Natural killer cell (primary cell): ENCODE measurements at regions of chrX and their contacts with region 1.

Region 1: GRCh38 chrX:38985375-38985774 is 184.1 kb downstream of the MID1IP1 start:
- DNase-seq: peak in 1 of 2 donors; percentile 48
- ATAC-seq: no peak
- H3K4me3 ChIP-seq: no peak overlapping the region
- H3K4me3 Mint-ChIP-seq: no peak overlapping the region
- H3K27ac ChIP-seq: no peak overlapping the region
- H3K27ac Mint-ChIP-seq: no peak overlapping the region
- H3K4me1 ChIP-seq: no peaks in the 10 kb centered on the region
- H3K4me1 Mint-ChIP-seq: no peaks in the 10 kb centered on the region
- H3K27me3 ChIP-seq: no peaks in the 10 kb centered on the region
- H3K27me3 Mint-ChIP-seq: peaks cover 0 to 12% of the 10 kb centered on the region in 2 donors
- CTCF ChIP-seq: no peak

Region 2: DNA sequence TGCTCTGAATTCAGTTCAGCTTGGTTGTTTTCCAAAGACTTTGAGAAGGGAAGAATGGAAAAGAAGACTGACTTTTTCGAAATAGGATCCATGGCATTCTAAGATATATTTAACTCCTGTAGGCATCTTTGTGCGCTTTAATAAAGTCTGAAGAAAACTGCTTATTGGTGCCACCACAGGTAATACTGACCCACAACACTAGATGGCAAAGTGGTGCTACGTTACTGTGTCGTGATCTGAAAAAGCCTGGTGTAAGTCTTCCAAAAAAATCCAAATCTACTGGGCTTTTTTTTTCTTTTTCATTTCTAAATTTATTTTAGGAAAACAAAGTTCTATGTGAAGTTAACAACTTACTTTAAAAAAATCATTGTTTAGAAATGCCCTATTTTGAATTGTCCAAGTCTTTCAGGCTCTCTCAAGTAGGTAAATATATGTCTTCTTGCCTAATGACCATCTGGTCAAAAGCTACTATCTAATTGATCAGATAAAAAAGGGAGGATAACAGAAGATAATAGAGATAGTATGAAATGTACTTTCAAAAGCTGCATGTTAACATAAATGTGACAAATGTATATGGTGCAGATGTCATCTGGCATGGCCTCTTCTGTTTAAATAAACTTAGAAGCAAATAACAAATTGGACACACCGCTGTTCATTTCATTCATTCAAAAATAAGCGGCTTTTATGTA is 231.1 kb before region 1 on chrX:
- intact Hi-C with region 1: loop called (anchors 1 kb)
- DNase-seq: peak in 1 of 2 donors; percentile 70
- ATAC-seq: peak in 2 of 3 donors; percentile 49 to 72
- H3K4me3 ChIP-seq: no peak overlapping the region
- H3K4me3 Mint-ChIP-seq: no peak overlapping the region
- H3K27ac ChIP-seq: no peak overlapping the region
- H3K27ac Mint-ChIP-seq: no peak overlapping the region
- H3K4me1 ChIP-seq: no peaks in the 10 kb centered on the region
- H3K4me1 Mint-ChIP-seq: no peaks in the 10 kb centered on the region
- H3K27me3 ChIP-seq: no peaks in the 10 kb centered on the region
- H3K27me3 Mint-ChIP-seq: peaks cover 12 to 26% of the 10 kb centered on the region in 2 donors
- CTCF ChIP-seq: peak; percentile 40

Region 3: DNA sequence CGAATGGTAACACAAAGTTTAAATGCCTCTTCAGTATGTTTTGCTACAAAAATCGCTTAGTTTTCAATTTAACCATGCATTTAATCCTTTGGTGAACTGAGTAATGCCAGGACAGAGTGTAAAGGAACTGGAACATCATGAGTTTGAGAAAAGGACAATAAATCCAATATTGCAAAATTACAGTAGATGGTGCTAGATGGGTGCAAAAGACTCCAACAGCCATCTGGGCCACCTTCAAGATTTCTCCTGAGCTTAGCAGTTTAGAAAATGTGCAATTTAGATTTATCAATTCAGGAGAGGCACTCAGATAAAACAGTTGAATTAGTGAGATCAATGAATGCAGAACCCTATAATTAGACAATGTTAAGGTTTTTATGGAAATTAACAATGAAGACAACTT is 217.3 kb before region 1 on chrX:
- intact Hi-C with region 1: loop called (anchors 5 kb)
- DNase-seq: peak in 1 of 2 donors; percentile 54
- ATAC-seq: no peak
- H3K4me3 ChIP-seq: no peak overlapping the region
- H3K4me3 Mint-ChIP-seq: no peak overlapping the region
- H3K27ac ChIP-seq: no peak overlapping the region
- H3K27ac Mint-ChIP-seq: no peak overlapping the region
- H3K4me1 ChIP-seq: no peaks in the 10 kb centered on the region
- H3K4me1 Mint-ChIP-seq: no peaks in the 10 kb centered on the region
- H3K27me3 ChIP-seq: no peaks in the 10 kb centered on the region
- H3K27me3 Mint-ChIP-seq: peaks cover 4 to 12% of the 10 kb centered on the region in 2 donors
- CTCF ChIP-seq: peak; percentile 39